CD4-positive, alpha-beta T cell (primary cell): ENCODE measurements at regions of chr17 and their contacts with region 1.

Region 1: DNA sequence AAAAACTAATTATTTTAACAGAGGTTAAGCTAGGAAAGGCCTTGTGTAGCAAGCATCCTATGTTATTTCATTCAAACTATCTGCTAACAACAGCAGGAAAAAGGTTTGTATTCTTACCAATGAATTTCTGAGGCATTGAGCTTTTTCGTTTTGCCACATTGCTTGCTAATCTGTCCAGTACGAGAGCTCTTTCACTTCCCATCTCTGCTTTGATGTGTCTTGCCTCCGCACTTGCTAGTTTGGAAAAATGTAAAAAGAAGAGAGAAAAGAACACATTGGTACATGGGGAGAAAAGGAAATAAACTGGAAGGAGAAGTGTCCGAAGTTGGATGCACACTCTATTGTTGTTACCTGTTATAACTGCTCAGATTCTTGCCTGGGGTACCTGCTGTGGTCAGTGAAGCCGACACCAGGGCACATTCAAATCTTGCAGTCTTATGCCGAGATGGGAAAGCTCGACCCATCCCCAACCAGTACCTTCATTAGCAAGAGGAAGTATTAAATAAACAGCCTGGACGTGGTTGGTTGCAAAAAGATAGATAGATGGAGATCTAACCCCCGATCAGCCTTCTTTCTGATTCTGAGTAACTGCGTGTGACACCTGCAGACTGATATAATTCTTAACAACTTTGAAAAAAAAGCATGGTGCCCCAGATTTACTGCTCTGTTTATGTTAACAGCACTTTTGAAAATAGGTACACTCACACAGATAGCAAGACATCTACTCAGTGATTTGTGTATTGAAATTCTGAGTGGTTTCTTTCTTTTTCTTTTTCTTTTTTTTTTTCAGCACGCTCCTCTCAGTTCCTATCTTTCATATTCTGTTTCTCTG is 40.0 kb downstream of the GRB7 start:
- DNase-seq: peak in 4 of 14 experiments; percentile 42 to 67 (median 66)
- ATAC-seq: peak; percentile 58
- H3K4me3 ChIP-seq: peak overlapping the region; percentile 64
- H3K4me3 Mint-ChIP-seq: peak overlapping the region; percentile 91
- H3K27ac ChIP-seq: peak overlapping the region; percentile 74 to 78
- H3K27ac Mint-ChIP-seq: peak overlapping the region; percentile 84
- H3K4me1 ChIP-seq: peaks cover 62% of the 10 kb centered on the region
- H3K4me1 Mint-ChIP-seq: peaks cover 89% of the 10 kb centered on the region
- H3K27me3 ChIP-seq: no peaks in the 10 kb centered on the region
- H3K27me3 Mint-ChIP-seq: no peaks in the 10 kb centered on the region
- CTCF ChIP-seq: no peak

Region 2: DNA sequence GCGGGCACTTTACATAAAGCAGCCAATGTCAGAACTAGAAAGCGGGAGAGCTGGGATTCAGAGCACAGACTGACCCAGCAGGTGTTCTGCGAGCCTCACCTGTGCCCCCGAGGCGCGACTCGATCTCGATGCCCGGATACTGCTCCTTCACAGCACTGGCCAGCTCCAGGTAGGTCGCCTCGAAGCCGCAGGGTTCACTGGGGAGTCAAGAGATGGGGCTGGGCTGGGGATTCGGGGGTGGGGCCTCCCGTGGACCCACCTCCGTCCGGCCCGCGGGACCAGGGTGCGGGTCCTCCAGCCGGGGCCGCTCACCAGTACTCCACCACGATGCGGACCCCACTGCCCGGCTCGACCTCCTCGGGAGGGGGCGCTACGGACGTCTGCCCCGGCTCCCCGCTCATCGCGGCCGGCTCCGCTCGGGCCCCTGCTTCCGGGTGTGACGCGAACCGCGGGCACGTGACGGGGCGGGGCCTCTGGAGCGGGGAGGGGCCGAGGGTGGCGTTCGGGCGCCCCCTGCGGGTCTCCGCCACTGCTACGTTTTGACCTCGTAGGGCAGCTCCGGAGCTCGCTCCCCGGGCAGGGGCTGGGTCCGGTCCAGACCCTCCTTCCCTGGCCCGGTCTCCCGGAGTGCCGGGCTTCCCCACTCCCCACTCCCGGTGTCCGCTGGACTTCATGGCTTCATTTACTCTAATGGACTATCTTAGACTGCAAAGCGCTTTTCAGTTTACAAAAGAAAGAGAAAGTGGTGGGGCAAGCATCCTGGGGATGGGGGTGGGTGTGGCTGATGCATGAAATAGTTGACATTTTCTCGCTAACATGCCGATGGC is 47.4 kb before region 1 on chr17 and contains the start of gene MIEN1:
- CTCF ChIA-PET with region 1: interaction called, 16 read pairs
- POLR2A ChIA-PET with region 1: interaction called, 4 read pairs
- intact Hi-C with region 1: no loop called
- DNase-seq: peak; percentile 86 to 98 (median 94)
- ATAC-seq: peak; percentile 91
- H3K4me3 ChIP-seq: peak within 1 kb of the TSS; percentile 79
- H3K4me3 Mint-ChIP-seq: peak within 1 kb of the TSS; percentile 91
- H3K27ac ChIP-seq: peak within 1 kb of the TSS; percentile 90 to 91
- H3K27ac Mint-ChIP-seq: peak within 1 kb of the TSS; percentile 88
- H3K4me1 ChIP-seq: peaks cover 23% of the 10 kb centered on the region
- H3K4me1 Mint-ChIP-seq: peaks cover 17% of the 10 kb centered on the region
- H3K27me3 ChIP-seq: no peaks in the 10 kb centered on the region
- H3K27me3 Mint-ChIP-seq: no peaks in the 10 kb centered on the region
- CTCF ChIP-seq: peak; percentile 91
- total RNA-seq, gene MIEN1: 31.5 to 32.3 TPM

Region 3: DNA sequence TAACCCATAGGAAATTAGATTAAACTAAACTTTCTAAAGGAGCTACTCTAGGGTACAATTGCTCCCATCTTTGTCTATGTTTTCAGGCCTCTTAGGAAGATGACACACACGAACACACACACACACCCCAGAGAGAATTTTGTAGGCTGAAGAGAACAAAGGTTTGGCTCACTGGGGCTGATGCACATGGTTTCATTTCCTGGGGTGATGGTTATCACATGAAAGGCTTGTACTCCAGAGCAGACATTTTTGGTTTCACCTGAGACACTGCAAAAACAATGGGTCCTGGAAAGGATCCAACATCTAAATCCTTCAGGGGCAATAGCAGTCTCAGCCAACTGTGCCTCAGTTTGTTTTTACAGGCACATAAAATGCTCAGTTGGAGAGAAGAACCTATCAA is 22.8 kb after region 1 on chr17:
- CTCF ChIA-PET with region 1: interaction called, 3 read pairs
- POLR2A ChIA-PET with region 1: interaction called, 38 read pairs
- intact Hi-C with region 1: loop called in 1 of 2 experiments (anchors 2 kb)
- DNase-seq: peak in 13 of 14 experiments; percentile 37 to 88 (median 51)
- ATAC-seq: peak; percentile 98
- H3K4me3 ChIP-seq: no peak overlapping the region
- H3K4me3 Mint-ChIP-seq: peak overlapping the region; percentile 39
- H3K27ac ChIP-seq: peak overlapping the region; percentile 24 to 58
- H3K27ac Mint-ChIP-seq: peak overlapping the region; percentile 92
- H3K4me1 ChIP-seq: peaks cover 33% of the 10 kb centered on the region
- H3K4me1 Mint-ChIP-seq: peaks cover 65% of the 10 kb centered on the region
- H3K27me3 ChIP-seq: no peaks in the 10 kb centered on the region
- H3K27me3 Mint-ChIP-seq: no peaks in the 10 kb centered on the region
- CTCF ChIP-seq: no peak

Region 4: GRCh38 chr17:39813631-39814030 is 35.9 kb after region 1 on chr17:
- CTCF ChIA-PET with region 1: interaction called, 6 read pairs
- POLR2A ChIA-PET with region 1: interaction called, 12 read pairs
- intact Hi-C with region 1: loop called in 1 of 2 experiments (anchors 5 kb)
- DNase-seq: peak; percentile 39 to 94 (median 54)
- ATAC-seq: peak; percentile 90
- H3K4me3 ChIP-seq: peak overlapping the region; percentile 15
- H3K4me3 Mint-ChIP-seq: peak overlapping the region; percentile 76
- H3K27ac ChIP-seq: peak overlapping the region; percentile 68 to 79
- H3K27ac Mint-ChIP-seq: peak overlapping the region; percentile 90
- H3K4me1 ChIP-seq: peaks cover 35% of the 10 kb centered on the region
- H3K4me1 Mint-ChIP-seq: peaks cover 84% of the 10 kb centered on the region
- H3K27me3 ChIP-seq: no peaks in the 10 kb centered on the region
- H3K27me3 Mint-ChIP-seq: no peaks in the 10 kb centered on the region
- CTCF ChIP-seq: no peak

Region 5: GRCh38 chr17:39822051-39822451 is 44.3 kb after region 1 on chr17:
- CTCF ChIA-PET with region 1: interaction called, 3 read pairs
- POLR2A ChIA-PET with region 1: interaction called, 17 read pairs
- intact Hi-C with region 1: loop called in 1 of 2 experiments (anchors 5 kb)
- DNase-seq: peak in 2 of 14 experiments; percentile 33 to 55
- ATAC-seq: no peak
- H3K4me3 ChIP-seq: no peak overlapping the region
- H3K4me3 Mint-ChIP-seq: no peak overlapping the region
- H3K27ac ChIP-seq: peak overlapping the region in 1 of 2 donors; percentile 26
- H3K27ac Mint-ChIP-seq: peak overlapping the region; percentile 94
- H3K4me1 ChIP-seq: peaks cover 35% of the 10 kb centered on the region
- H3K4me1 Mint-ChIP-seq: peaks cover 58% of the 10 kb centered on the region
- H3K27me3 ChIP-seq: no peaks in the 10 kb centered on the region
- H3K27me3 Mint-ChIP-seq: no peaks in the 10 kb centered on the region
- CTCF ChIP-seq: no peak

Region 6: GRCh38 chr17:39903158-39903884 is 125.6 kb after region 1 on chr17:
- CTCF ChIA-PET with region 1: no interaction called
- POLR2A ChIA-PET with region 1: no interaction called
- intact Hi-C with region 1: no loop called
- DNase-seq: peak in 1 of 14 experiments; percentile 50
- ATAC-seq: peak; percentile 43
- H3K4me3 ChIP-seq: no peak overlapping the region
- H3K4me3 Mint-ChIP-seq: no peak overlapping the region
- H3K27ac ChIP-seq: no peak overlapping the region
- H3K27ac Mint-ChIP-seq: peak overlapping the region; percentile 47
- H3K4me1 ChIP-seq: peaks cover 15% of the 10 kb centered on the region
- H3K4me1 Mint-ChIP-seq: peaks cover 13% of the 10 kb centered on the region
- H3K27me3 ChIP-seq: no peaks in the 10 kb centered on the region
- H3K27me3 Mint-ChIP-seq: no peaks in the 10 kb centered on the region
- CTCF ChIP-seq: no peak